ENCODE measurements at regions of chr3 and their contacts with region 1.

Region 1: DNA sequence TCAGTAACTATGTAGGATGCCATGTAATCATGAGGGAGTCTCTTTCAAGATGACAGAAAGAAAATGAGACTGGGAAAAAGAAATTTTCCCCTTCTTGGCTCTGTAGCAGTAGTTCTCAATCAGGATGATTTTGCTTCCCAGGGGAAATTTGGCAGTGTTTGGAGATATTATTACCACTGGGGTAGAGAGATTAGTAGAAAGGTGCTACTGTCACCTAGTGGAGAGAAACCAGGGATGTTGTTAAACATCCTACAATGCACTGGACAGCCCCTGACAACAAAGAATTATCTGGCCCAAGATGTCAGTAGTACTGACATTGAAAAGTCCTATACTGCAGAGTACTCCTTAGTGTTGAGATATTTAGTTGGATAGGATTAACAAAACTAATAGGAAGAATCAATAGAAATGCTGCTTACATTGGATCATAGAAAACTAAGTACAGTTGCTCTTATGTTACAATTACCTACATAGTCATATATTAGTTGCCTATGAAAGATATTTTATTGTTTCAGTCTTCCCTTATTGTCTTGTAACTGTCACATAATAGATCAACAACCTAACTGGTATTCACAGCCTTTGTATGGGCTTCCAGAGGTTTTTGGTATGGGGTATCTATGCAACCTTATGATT is 433.3 kb downstream of the RAP2B start:
- DNase-seq: peak in 1 of 2 experiments; percentile 33
- H3K4me3 ChIP-seq: no peak overlapping the region
- H3K4me3 Mint-ChIP-seq: no peak overlapping the region
- H3K27ac Mint-ChIP-seq: no peak overlapping the region
- H3K4me1 ChIP-seq: 0 out of 2 replicates have a peak, but pooled peaks cover 6% of the 10 kb centered on the region
- H3K4me1 Mint-ChIP-seq: no peaks in the 10 kb centered on the region
- H3K27me3 ChIP-seq: no peaks in the 10 kb centered on the region
- H3K27me3 Mint-ChIP-seq: no peaks in the 10 kb centered on the region
- CTCF ChIP-seq: peak; percentile 55 to 69

Region 2: GRCh38 chr3:153026026-153026425 is 569.3 kb before region 1 on chr3:
- CTCF ChIA-PET with region 1: no interaction called
- POLR2A ChIA-PET with region 1: no interaction called
- intact Hi-C with region 1: loop called (anchors 1 kb)
- DNase-seq: peak in 1 of 2 experiments; percentile 12
- H3K4me3 ChIP-seq: no peak overlapping the region
- H3K4me3 Mint-ChIP-seq: no peak overlapping the region
- H3K27ac Mint-ChIP-seq: no peak overlapping the region
- H3K4me1 ChIP-seq: no peaks in the 10 kb centered on the region
- H3K4me1 Mint-ChIP-seq: no peaks in the 10 kb centered on the region
- H3K27me3 ChIP-seq: no peaks in the 10 kb centered on the region
- H3K27me3 Mint-ChIP-seq: peaks cover 5% of the 10 kb centered on the region
- CTCF ChIP-seq: peak; percentile 49 to 54

Region 3: GRCh38 chr3:153161138-153161713 is 434.1 kb before region 1 on chr3:
- CTCF ChIA-PET with region 1: no interaction called
- POLR2A ChIA-PET with region 1: no interaction called
- intact Hi-C with region 1: loop called (anchors 2 kb)
- DNase-seq: peak; percentile 94 to 98
- H3K4me3 ChIP-seq: peak overlapping the region; percentile 82
- H3K4me3 Mint-ChIP-seq: peak overlapping the region; percentile 93
- H3K27ac Mint-ChIP-seq: peak overlapping the region; percentile 89
- H3K4me1 ChIP-seq: peaks cover 36% of the 10 kb centered on the region
- H3K4me1 Mint-ChIP-seq: peaks cover 14% of the 10 kb centered on the region
- H3K27me3 ChIP-seq: no peaks in the 10 kb centered on the region
- H3K27me3 Mint-ChIP-seq: no peaks in the 10 kb centered on the region
- CTCF ChIP-seq: no peak

Region 4: GRCh38 chr3:153443961-153444360 is 151.3 kb before region 1 on chr3:
- CTCF ChIA-PET with region 1: no interaction called
- POLR2A ChIA-PET with region 1: no interaction called
- intact Hi-C with region 1: loop called (anchors 2 kb)
- DNase-seq: peak in 1 of 2 experiments; percentile 15
- H3K4me3 ChIP-seq: no peak overlapping the region
- H3K4me3 Mint-ChIP-seq: no peak overlapping the region
- H3K27ac Mint-ChIP-seq: no peak overlapping the region
- H3K4me1 ChIP-seq: no peaks in the 10 kb centered on the region
- H3K4me1 Mint-ChIP-seq: peaks cover 5% of the 10 kb centered on the region
- H3K27me3 ChIP-seq: no peaks in the 10 kb centered on the region
- H3K27me3 Mint-ChIP-seq: no peaks in the 10 kb centered on the region
- CTCF ChIP-seq: peak; percentile 20 to 33

Region 5: DNA sequence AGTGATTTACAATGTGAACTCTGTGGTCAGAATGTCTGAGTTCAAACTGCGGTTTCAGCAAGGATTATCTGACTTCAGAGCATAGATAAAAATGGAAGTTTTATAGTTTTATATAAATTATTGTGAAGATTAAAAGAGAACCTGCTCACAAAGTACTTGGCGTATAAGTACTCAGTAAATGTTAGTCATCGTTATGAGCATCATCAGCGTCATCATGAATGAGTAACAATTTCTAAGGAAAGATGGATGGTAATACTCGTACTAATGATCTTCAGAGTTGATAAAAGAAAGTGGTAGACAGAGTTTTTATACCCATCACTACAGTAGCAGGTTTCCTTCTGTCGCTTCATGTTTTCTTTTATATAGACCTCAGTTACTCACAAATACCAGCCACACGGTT is 91.4 kb before region 1 on chr3:
- CTCF ChIA-PET with region 1: no interaction called
- POLR2A ChIA-PET with region 1: no interaction called
- intact Hi-C with region 1: no loop called
- DNase-seq: no peak
- H3K4me3 ChIP-seq: no peak overlapping the region
- H3K4me3 Mint-ChIP-seq: no peak overlapping the region
- H3K27ac Mint-ChIP-seq: no peak overlapping the region
- H3K4me1 ChIP-seq: no peaks in the 10 kb centered on the region
- H3K4me1 Mint-ChIP-seq: no peaks in the 10 kb centered on the region
- H3K27me3 ChIP-seq: no peaks in the 10 kb centered on the region
- H3K27me3 Mint-ChIP-seq: no peaks in the 10 kb centered on the region
- CTCF ChIP-seq: no peak

Region 6: DNA sequence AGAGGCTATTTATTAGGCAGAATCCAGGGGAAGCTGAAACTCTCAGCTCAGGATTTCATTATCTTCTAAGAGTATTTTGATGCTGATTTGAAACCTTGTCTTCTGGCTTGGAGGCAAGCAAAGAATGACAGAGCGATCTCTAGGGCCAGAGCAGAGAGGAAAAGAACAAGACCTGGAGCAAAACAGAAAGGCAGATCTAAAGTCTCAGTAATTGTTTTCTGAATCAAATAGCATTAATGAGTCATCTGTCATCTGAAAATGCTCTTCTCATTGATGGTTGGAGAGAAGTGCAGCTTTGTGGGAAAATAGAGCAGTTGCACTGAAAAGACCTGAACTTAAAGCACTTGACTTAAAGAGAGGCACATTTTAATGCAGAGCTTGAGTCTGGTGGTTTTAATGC is 47.3 kb before region 1 on chr3:
- CTCF ChIA-PET with region 1: no interaction called
- POLR2A ChIA-PET with region 1: no interaction called
- intact Hi-C with region 1: no loop called
- DNase-seq: no peak
- H3K4me3 ChIP-seq: no peak overlapping the region
- H3K4me3 Mint-ChIP-seq: no peak overlapping the region
- H3K27ac Mint-ChIP-seq: no peak overlapping the region
- H3K4me1 ChIP-seq: no peaks in the 10 kb centered on the region
- H3K4me1 Mint-ChIP-seq: no peaks in the 10 kb centered on the region
- H3K27me3 ChIP-seq: no peaks in the 10 kb centered on the region
- H3K27me3 Mint-ChIP-seq: no peaks in the 10 kb centered on the region
- CTCF ChIP-seq: no peak

Region 7: GRCh38 chr3:153768561-153769469 is 173.5 kb after region 1 on chr3:
- CTCF ChIA-PET with region 1: no interaction called
- POLR2A ChIA-PET with region 1: no interaction called
- intact Hi-C with region 1: loop called (anchors 2 kb)
- DNase-seq: peak in 1 of 2 experiments; percentile 59
- H3K4me3 ChIP-seq: no peak overlapping the region
- H3K4me3 Mint-ChIP-seq: no peak overlapping the region
- H3K27ac Mint-ChIP-seq: no peak overlapping the region
- H3K4me1 ChIP-seq: no peaks in the 10 kb centered on the region
- H3K4me1 Mint-ChIP-seq: no peaks in the 10 kb centered on the region
- H3K27me3 ChIP-seq: no peaks in the 10 kb centered on the region
- H3K27me3 Mint-ChIP-seq: peaks cover 7% of the 10 kb centered on the region
- CTCF ChIP-seq: peak; percentile 77 to 80